Activated CD4-positive, alpha-beta T cell treated with anti-CD3 and anti-CD28 coated beads for 36 hours (primary cell): ENCODE measurements at regions of chr1 and their contacts with region 1.

Region 1: GRCh38 chr1:45011837-45012638 is at the start of gene UROD:
- DNase-seq: peak; percentile 96
- ATAC-seq: peak; percentile 80
- H3K4me3 Mint-ChIP-seq: peak within 1 kb of the TSS; percentile 74
- H3K27ac Mint-ChIP-seq: peak within 1 kb of the TSS; percentile 97
- H3K4me1 Mint-ChIP-seq: peaks cover 36% of the 10 kb centered on the region
- H3K27me3 Mint-ChIP-seq: no peaks in the 10 kb centered on the region
- total RNA-seq, gene UROD: 123 to 134 TPM

Region 2: DNA sequence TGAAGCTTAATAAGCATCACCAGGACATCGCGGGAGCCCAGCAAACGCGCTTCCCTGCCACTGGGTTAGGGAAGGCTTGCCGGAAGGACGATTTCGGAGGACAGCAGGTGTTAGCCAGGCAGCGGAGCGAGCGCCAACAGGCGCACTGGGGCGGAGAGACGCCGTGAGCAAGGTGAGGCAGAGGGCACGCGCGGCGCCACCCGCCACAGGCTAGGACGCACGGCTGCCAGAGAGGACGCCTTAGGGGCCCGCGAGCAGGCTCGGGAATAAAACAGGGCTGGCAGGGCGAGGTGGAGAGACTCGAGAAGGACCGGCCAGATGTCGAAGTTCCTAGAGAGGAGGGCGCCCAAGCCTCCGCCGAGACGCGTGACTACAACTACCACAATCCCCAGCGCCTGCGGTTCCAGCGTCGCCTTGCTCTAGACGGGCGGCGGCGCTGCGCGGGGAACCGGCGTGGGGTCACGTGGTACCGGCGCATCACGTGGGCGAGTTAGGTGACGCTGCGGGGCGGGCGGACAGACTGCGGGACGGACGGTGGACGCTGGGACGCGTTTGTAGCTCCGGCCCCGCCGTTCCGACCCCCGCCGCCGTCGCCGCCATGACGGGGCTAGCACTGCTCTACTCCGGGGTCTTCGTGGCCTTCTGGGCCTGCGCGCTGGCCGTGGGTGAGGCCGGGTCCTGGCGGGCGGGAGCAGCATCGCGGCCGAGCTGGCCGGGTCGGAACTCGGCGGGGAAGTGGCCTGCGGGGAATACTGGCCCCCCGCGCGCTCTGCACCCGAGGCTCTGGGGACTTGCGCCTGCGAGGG is 1037.4 kb before region 1 on chr1 and contains the start of gene ATP6V0B:
- CTCF ChIA-PET with region 1: no interaction called
- POLR2A ChIA-PET with region 1: no interaction called
- intact Hi-C with region 1: no loop called
- DNase-seq: peak; percentile 99
- ATAC-seq: peak; percentile 76
- H3K4me3 Mint-ChIP-seq: peak within 1 kb of the TSS; percentile 81
- H3K27ac Mint-ChIP-seq: peak within 1 kb of the TSS; percentile 88
- H3K4me1 Mint-ChIP-seq: peaks cover 48% of the 10 kb centered on the region
- H3K27me3 Mint-ChIP-seq: no peaks in the 10 kb centered on the region
- total RNA-seq, gene ATP6V0B: 39.4 to 75.6 TPM

Region 3: GRCh38 chr1:44472620-44473525 is 539.2 kb before region 1 on chr1:
- CTCF ChIA-PET with region 1: no interaction called
- POLR2A ChIA-PET with region 1: no interaction called
- intact Hi-C with region 1: no loop called
- DNase-seq: no peak
- ATAC-seq: no peak
- H3K4me3 Mint-ChIP-seq: no peak overlapping the region
- H3K27ac Mint-ChIP-seq: no peak overlapping the region
- H3K4me1 Mint-ChIP-seq: peaks cover 8% of the 10 kb centered on the region
- H3K27me3 Mint-ChIP-seq: peaks cover 13% of the 10 kb centered on the region

Region 4: GRCh38 chr1:44511769-44512168 is 500.3 kb before region 1 on chr1:
- CTCF ChIA-PET with region 1: no interaction called
- POLR2A ChIA-PET with region 1: no interaction called
- intact Hi-C with region 1: no loop called
- DNase-seq: peak; percentile 33
- ATAC-seq: peak; percentile 80
- H3K4me3 Mint-ChIP-seq: no peak overlapping the region
- H3K27ac Mint-ChIP-seq: peak overlapping the region; percentile 27
- H3K4me1 Mint-ChIP-seq: peaks cover 16% of the 10 kb centered on the region
- H3K27me3 Mint-ChIP-seq: peaks cover 7% of the 10 kb centered on the region

Region 5: GRCh38 chr1:44730741-44731512 is 281.1 kb before region 1 on chr1 and contains the start of gene RNU5D-1:
- CTCF ChIA-PET with region 1: no interaction called
- POLR2A ChIA-PET with region 1: interaction called, 25 read pairs
- intact Hi-C with region 1: loop called (anchors 2 to 5 kb)
- DNase-seq: peak; percentile 98
- ATAC-seq: peak; percentile 85
- H3K4me3 Mint-ChIP-seq: peak within 1 kb of the TSS; percentile 67
- H3K27ac Mint-ChIP-seq: peak within 1 kb of the TSS; percentile 100
- H3K4me1 Mint-ChIP-seq: peaks cover 45% of the 10 kb centered on the region
- H3K27me3 Mint-ChIP-seq: no peaks in the 10 kb centered on the region
- total RNA-seq, gene RNU5D-1: not detected

Region 6: DNA sequence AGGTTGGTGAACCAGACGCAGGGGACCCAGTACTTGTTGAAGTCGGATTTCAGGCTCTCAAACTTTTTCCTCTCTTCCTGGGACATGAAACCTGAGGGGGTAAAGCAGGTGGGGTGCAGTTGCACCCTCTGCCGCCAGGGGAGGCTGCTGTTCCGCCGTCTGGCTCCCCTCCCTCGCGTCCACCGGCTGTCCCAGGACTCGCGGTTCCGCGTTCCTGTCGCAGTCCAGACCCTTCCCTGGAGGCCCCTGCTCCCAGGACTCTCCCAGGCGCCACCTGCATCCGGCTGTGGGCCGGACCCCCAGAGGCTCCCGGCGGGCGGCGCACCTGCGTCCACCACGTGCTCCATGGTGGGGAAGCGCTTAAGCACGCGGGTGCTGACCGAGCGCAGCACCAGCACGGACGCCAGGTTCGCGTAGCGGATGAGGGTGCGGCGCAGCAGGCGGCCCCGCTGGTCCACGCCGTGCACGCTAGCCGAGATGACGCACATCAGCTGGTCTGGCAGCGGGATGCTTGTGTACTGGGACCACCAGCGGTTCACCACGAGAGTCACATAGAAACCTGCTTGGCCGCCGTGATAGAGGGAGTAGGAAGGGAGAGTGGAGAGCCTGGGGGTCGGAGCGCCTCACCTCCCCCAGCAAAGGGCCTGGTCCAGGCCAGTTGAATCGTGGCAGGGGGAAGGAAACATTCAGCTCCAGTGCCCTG is 225.7 kb before region 1 on chr1:
- CTCF ChIA-PET with region 1: interaction called, 3 read pairs
- POLR2A ChIA-PET with region 1: interaction called, 3 read pairs
- intact Hi-C with region 1: loop called (anchors 1 to 5 kb)
- DNase-seq: peak; percentile 85
- ATAC-seq: peak; percentile 73
- H3K4me3 Mint-ChIP-seq: peak overlapping the region; percentile 66
- H3K27ac Mint-ChIP-seq: peak overlapping the region; percentile 69
- H3K4me1 Mint-ChIP-seq: peaks cover 31% of the 10 kb centered on the region
- H3K27me3 Mint-ChIP-seq: no peaks in the 10 kb centered on the region

Region 7: GRCh38 chr1:44819608-44820327 is 192.3 kb before region 1 on chr1:
- CTCF ChIA-PET with region 1: no interaction called
- POLR2A ChIA-PET with region 1: interaction called, 40 read pairs
- intact Hi-C with region 1: loop called in 1 of 2 experiments (anchors 1 kb)
- DNase-seq: peak; percentile 88
- ATAC-seq: peak; percentile 88
- H3K4me3 Mint-ChIP-seq: peak overlapping the region; percentile 85
- H3K27ac Mint-ChIP-seq: peak overlapping the region; percentile 100
- H3K4me1 Mint-ChIP-seq: peaks cover 37% of the 10 kb centered on the region
- H3K27me3 Mint-ChIP-seq: no peaks in the 10 kb centered on the region

Region 8: DNA sequence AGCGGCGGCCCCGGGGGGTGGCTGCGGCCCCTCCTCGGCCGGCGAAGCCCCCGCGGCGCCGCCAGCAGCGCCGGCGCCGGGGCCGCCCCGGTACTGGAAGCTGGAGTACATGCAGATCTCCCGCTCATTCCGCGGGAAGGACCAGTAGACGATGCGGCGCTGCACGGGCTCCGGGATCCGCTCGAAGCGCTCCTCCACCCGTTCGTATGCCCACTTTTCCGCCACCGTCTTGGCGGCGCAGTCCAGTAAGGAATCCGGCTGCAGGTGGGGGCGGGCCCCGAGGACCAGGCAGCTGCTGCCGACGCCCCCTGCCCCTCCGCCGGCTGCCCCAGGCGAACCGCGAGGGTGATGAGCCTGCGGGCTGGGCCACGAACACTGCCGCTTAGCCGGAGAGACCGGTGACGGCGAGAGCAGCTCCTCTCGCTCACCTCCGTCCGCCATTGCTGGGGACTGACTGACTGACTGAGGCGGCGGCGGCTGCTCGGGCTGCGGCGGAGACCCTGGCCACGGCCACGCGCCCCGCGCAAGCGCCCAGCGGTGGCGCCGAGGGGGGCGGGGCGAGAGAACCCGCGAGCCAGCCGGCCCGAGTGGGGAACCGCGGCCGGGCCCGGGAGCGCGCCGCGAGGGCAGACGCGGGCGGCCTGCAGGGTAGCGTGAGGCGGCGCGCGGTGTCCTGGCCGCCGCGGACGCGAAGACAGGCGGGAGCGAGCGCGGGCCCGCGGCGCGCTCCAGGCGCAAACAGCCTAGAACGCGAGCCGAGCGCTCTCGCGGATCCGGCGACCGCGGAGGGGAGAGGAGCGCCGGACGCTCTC is 194.1 kb after region 1 on chr1 and contains the start of gene ZSWIM5:
- CTCF ChIA-PET with region 1: interaction called, 5 read pairs
- POLR2A ChIA-PET with region 1: no interaction called
- intact Hi-C with region 1: loop called (anchors 1 to 5 kb)
- DNase-seq: peak; percentile 75
- ATAC-seq: peak; percentile 80
- H3K4me3 Mint-ChIP-seq: peak within 1 kb of the TSS; percentile 82
- H3K27ac Mint-ChIP-seq: peak within 1 kb of the TSS; percentile 87
- H3K4me1 Mint-ChIP-seq: peaks cover 33% of the 10 kb centered on the region
- H3K27me3 Mint-ChIP-seq: peaks cover 18% of the 10 kb centered on the region
- total RNA-seq, gene ZSWIM5: 0.63 to 0.69 TPM

Region 9: DNA sequence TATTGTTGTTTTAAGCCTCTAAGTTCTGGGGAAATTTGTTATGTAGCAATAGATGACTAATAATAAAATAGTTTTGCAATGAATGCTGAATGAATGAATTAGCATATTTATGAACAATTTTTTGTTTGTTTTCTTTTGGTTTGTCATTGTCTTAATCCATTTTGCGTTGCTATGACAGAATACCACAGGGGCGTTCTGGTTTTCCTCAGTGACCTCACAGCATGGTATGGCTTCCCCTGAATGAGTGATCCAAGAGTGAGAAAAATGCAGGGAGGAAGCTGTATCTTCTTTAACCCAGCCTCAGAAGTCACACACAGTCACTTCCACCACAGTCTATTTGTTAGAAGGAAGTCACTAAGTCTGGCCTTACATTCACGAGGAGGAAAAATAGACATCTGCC is 260.9 kb after region 1 on chr1:
- CTCF ChIA-PET with region 1: no interaction called
- POLR2A ChIA-PET with region 1: no interaction called
- intact Hi-C with region 1: no loop called
- DNase-seq: no peak
- ATAC-seq: peak; percentile 30
- H3K4me3 Mint-ChIP-seq: no peak overlapping the region
- H3K27ac Mint-ChIP-seq: no peak overlapping the region
- H3K4me1 Mint-ChIP-seq: no peaks in the 10 kb centered on the region
- H3K27me3 Mint-ChIP-seq: no peaks in the 10 kb centered on the region

Region 10: GRCh38 chr1:45490626-45491486 is 478.8 kb after region 1 on chr1 and contains the start of gene TESK2:
- CTCF ChIA-PET with region 1: interaction called, 51 read pairs
- POLR2A ChIA-PET with region 1: interaction called, 3 read pairs
- intact Hi-C with region 1: loop called (anchors 1 kb)
- DNase-seq: peak; percentile 97
- ATAC-seq: peak; percentile 94
- H3K4me3 Mint-ChIP-seq: no peak within 1 kb of the TSS
- H3K27ac Mint-ChIP-seq: no peak within 1 kb of the TSS
- H3K4me1 Mint-ChIP-seq: peaks cover 4% of the 10 kb centered on the region
- H3K27me3 Mint-ChIP-seq: no peaks in the 10 kb centered on the region
- total RNA-seq, gene TESK2: 3.1 to 3.3 TPM